AG04450 (cell line): ENCODE measurements at regions of chr10 and their contacts with region 1.

Region 1: GRCh38 chr10:24989867-24990266 is 26.1 kb downstream of the ENKUR start:
- DNase-seq: no peak
- H3K4me3 ChIP-seq: no peak overlapping the region
- H3K27ac ChIP-seq: no peak overlapping the region
- H3K27me3 ChIP-seq: peaks cover 2% of the 10 kb centered on the region
- CTCF ChIP-seq: 0 out of 2 replicates have a peak, but pooled peaks have one; percentile 25

Region 2: GRCh38 chr10:24930427-24930826 is 59.4 kb before region 1 on chr10:
- CTCF ChIA-PET with region 1: interaction called, 14 read pairs
- POLR2A ChIA-PET with region 1: no interaction called
- DNase-seq: no peak
- H3K4me3 ChIP-seq: no peak overlapping the region
- H3K27ac ChIP-seq: no peak overlapping the region
- H3K27me3 ChIP-seq: no peaks in the 10 kb centered on the region
- CTCF ChIP-seq: no peak